ENCODE measurements at regions of chr19 and their contacts with region 1.

Region 1: GRCh38 chr19:10478903-10479384 is 24.2 kb downstream of the KEAP1 start:
- DNase-seq: peak; percentile 94
- ATAC-seq: peak; percentile 97
- H3K4me3 Mint-ChIP-seq: peak overlapping the region; percentile 28
- H3K27ac Mint-ChIP-seq: no peak overlapping the region
- H3K4me1 Mint-ChIP-seq: peaks cover 12% of the 10 kb centered on the region
- H3K27me3 Mint-ChIP-seq: no peaks in the 10 kb centered on the region

Region 2: DNA sequence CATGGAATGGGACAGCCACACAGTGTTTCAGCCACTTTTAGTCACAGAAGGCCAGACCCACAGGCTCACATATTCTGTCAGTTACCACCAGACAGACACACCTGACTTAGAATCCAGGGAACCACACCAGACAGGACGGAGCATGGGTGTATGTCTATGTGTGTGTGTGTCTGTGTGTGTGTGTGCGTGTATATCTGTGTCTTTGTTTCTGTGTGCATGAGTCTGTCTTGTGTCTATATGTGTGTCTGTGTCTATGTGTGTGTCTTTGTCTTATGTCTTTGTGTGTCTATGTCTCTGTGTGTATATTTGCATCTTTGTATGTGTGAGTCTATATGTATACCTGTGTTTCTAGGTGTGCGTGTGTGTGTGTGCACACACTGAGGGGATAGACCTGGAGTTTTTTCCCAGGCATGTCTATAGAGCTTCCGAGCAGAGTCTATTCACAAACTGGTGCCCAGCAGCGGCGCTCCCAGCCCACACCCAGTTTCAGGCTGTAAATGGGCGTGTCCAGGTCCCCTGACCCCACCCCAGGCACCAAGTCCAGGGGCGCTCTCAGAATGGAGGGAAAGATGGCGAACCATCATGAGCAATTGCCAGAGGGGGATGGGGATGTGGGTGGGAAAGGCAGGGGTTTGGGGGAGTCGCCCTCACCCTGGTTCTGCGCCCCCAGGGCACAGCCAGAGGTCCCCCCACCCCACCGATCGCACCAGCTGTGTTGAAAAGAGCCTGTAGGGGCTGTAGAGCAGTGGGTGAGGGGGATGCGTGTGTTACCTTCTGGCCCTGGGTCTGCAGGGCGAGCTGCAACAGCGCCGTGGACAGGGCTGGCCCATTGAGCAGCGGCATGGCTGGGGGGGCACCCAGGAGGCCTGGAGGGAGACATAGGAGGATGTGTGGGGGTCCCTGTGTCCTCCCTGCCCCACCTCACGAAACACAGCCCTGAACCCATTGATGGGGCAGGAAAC is 156.8 kb before region 1 on chr19:
- CTCF ChIA-PET with region 1: no interaction called
- DNase-seq: no peak
- ATAC-seq: no peak
- H3K4me3 Mint-ChIP-seq: no peak overlapping the region
- H3K27ac Mint-ChIP-seq: no peak overlapping the region
- H3K4me1 Mint-ChIP-seq: no peaks in the 10 kb centered on the region
- H3K27me3 Mint-ChIP-seq: no peaks in the 10 kb centered on the region

Region 3: DNA sequence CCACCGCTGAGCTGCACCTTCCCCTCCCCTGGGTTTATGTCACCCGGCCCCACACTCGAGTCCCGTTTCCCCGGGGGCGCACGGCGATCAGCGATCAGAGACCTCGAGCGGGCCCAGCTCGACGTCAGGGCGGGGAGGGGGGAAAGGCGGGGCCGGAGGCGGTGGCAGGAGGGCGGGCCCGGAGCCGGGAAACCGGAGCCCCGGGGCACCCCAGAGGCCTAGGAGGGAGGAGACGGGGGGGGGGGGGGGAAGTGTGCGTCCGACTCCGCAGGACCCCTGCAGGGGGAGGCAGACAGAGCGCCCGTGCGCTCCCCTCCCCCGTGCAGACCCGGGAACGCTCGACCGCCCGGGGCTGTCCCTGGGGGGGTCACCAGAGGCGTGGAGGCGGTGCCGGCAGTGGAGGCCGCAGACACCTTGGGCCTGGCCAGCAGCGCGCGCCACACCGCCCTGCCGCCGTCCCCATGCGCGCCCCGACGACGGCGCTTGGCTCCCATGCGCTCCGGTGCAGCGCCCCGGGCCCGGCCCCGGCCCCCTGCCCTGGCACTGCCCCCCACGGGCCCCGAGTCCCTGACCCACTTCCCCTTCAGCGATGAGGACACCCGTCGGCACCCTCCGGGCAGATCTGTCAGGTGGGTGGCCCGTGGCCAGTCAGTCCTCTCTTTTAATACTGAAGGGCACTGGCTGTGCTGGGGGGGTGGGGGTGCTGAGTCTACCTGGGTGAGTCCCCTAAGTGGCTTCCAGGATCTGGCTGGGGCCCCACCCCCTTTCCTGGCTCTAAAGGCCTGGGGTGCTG is 46.8 kb before region 1 on chr19:
- CTCF ChIA-PET with region 1: interaction called, 10 read pairs
- DNase-seq: peak; percentile 75
- ATAC-seq: peak; percentile 49
- H3K4me3 Mint-ChIP-seq: peak overlapping the region; percentile 80
- H3K27ac Mint-ChIP-seq: peak overlapping the region; percentile 96
- H3K4me1 Mint-ChIP-seq: peaks cover 75% of the 10 kb centered on the region
- H3K27me3 Mint-ChIP-seq: peaks cover 6% of the 10 kb centered on the region

Region 4: DNA sequence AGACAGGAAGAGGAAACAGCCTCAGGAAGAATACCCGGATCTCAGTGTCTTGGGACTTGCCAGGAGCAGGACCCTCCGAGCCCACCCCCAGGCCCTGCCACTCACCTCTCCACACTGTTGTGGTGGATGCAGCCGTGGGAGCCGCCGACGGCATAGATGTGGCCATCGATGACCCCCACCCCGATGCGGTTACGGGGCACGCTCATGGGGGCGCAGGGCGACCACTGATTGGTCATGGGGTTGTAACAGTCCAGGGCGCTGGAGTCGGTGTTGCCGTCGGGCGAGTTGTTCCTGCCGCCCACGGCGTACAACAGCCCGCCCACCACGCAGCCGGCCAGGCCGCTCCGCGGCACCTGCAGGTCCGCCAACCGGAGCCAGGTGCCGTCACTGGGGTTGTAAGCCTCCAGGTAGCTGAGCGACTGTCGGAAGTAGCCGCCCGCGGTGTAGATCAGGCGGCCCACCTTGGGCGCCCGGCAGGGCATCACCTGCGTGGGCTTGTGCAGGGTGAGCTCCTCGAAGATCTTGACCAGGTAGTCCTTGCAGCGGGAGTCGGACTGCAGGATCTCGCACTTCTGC is 12.6 kb after region 1 on chr19:
- CTCF ChIA-PET with region 1: interaction called, 22 read pairs
- DNase-seq: no peak
- ATAC-seq: no peak
- H3K4me3 Mint-ChIP-seq: no peak overlapping the region
- H3K27ac Mint-ChIP-seq: no peak overlapping the region
- H3K4me1 Mint-ChIP-seq: peaks cover 10% of the 10 kb centered on the region
- H3K27me3 Mint-ChIP-seq: no peaks in the 10 kb centered on the region

Region 5: GRCh38 chr19:10612491-10613119 is 133.7 kb after region 1 on chr19:
- CTCF ChIA-PET with region 1: no interaction called
- DNase-seq: no peak
- ATAC-seq: no peak
- H3K4me3 Mint-ChIP-seq: no peak overlapping the region
- H3K27ac Mint-ChIP-seq: no peak overlapping the region
- H3K4me1 Mint-ChIP-seq: peaks cover 17% of the 10 kb centered on the region
- H3K27me3 Mint-ChIP-seq: no peaks in the 10 kb centered on the region

Region 6: DNA sequence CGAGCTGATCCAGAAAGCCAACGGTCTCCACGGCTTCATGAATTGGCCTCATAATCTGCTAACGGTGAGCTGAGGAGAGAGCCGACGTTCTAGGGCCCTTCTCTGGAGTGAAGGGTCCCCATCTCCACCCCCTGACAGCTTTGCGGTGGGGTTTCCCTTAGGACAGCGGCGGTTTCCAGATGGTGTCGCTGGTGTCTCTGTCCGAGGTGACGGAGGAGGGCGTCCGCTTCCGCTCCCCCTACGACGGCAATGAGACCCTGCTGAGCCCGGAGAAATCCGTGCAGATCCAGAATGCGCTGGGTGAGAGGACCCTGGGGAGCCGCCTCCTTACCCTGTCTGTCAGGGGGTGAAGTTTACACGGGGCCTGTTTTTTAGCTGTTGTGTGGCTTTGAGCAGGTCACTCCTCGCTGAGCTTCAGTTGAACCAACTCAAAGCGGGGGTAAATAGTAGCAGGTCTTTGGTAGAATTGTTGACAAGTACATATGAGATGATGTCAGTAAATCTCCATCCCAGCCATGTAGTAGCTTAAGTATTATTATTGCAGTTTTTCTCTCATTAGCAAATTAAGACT is 223.1 kb after region 1 on chr19:
- CTCF ChIA-PET with region 1: interaction called, 12 read pairs
- DNase-seq: peak; percentile 62
- ATAC-seq: peak; percentile 35
- H3K4me3 Mint-ChIP-seq: peak overlapping the region; percentile 79
- H3K27ac Mint-ChIP-seq: peak overlapping the region; percentile 78
- H3K4me1 Mint-ChIP-seq: peaks cover 13% of the 10 kb centered on the region
- H3K27me3 Mint-ChIP-seq: peaks cover 7% of the 10 kb centered on the region